ENCODE measurements at regions of chr4 and their contacts with region 1.

Region 1: DNA sequence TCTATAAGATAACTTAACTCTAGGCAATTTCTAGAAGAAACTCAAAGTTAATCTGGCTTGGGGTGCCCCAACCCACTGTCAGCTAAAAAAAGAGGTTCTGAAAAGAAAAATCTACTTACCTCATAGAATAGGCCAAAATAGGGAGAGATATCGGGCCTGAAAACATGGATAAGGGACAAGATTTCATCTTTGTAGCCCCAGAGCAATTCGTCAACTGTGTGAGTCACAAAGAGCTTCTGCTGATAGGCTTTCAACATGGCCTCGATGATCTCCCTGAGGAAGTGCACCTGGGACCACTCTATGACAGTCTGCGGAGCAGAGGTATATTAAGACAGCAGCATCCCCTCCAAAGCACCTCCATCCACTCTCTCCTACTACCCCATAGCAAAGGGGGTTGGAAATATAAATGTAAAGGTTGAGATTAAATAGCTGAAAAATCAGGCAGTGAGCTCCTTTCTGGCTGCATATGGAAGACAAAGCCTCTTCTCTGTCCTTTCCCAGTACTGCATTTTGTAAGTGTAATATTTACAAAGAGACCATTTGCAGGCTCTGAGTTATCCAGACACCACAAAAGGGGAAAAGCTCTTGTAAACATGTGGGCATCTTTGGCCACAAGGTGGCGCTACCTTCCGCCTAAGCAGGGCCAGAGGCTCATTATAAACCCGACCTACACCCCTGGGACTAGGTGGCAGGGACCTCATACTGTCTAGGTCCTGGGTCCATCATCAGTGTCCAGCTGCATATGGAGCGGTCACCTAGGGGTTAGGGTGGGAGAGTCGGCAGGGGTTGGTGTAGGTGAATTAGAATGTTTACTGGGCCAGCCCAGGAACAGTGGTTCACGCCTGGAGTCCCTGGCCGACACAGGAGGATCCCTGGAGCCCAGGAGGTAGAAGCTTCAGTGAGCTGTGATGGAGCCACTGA is 31.5 kb upstream of the NUP54 start:
- DNase-seq: peak; percentile 92
- H3K4me3 ChIP-seq: no peak overlapping the region
- H3K27ac ChIP-seq: peak overlapping the region in 2 of 4 donors; percentile 34 to 37
- H3K4me1 ChIP-seq: peaks cover 0 to 17% (median 9%) of the 10 kb centered on the region in 4 donors
- H3K27me3 ChIP-seq: no peaks in the 10 kb centered on the region
- CTCF ChIP-seq: peak; percentile 71 to 96 (median 82)
- EP300 ChIP-seq: no peak
- POLR2A ChIP-seq: no peak

Region 2: GRCh38 chr4:76251441-76252270 is 72.0 kb after region 1 on chr4 and contains the start of gene FAM47E:
- intact Hi-C with region 1: loop called (anchors 1 kb)
- DNase-seq: peak; percentile 88
- H3K4me3 ChIP-seq: peak within 1 kb of the TSS; percentile 45 to 81 (median 56)
- H3K27ac ChIP-seq: peak within 1 kb of the TSS; percentile 10 to 46 (median 18)
- H3K4me1 ChIP-seq: peaks cover 0 to 16% (median 7%) of the 10 kb centered on the region in 4 donors
- H3K27me3 ChIP-seq: no peaks in the 10 kb centered on the region
- CTCF ChIP-seq: peak in 1 of 4 experiments; percentile 37
- EP300 ChIP-seq: no peak
- POLR2A ChIP-seq: no peak
- total RNA-seq, gene FAM47E: 1.7 to 3.3 (median 2.0) TPM

Region 3: GRCh38 chr4:76420762-76421581 is 241.3 kb after region 1 on chr4 and contains the start of gene CCDC158:
- intact Hi-C with region 1: loop called (anchors 2 kb)
- DNase-seq: no peak
- H3K4me3 ChIP-seq: peak within 1 kb of the TSS; percentile 36 to 59 (median 57)
- H3K27ac ChIP-seq: peak within 1 kb of the TSS in 3 of 4 donors; percentile 4 to 47 (median 24)
- H3K4me1 ChIP-seq: peaks cover 0 to 17% (median 14%) of the 10 kb centered on the region in 4 donors
- H3K27me3 ChIP-seq: peaks cover 0 to 3% (median 0%) of the 10 kb centered on the region in 3 donors
- CTCF ChIP-seq: no peak
- EP300 ChIP-seq: no peak
- POLR2A ChIP-seq: no peak
- total RNA-seq, gene CCDC158: 0.41 to 1.7 (median 0.82) TPM in 3 of 4 donors, not detected in the other

Region 4: DNA sequence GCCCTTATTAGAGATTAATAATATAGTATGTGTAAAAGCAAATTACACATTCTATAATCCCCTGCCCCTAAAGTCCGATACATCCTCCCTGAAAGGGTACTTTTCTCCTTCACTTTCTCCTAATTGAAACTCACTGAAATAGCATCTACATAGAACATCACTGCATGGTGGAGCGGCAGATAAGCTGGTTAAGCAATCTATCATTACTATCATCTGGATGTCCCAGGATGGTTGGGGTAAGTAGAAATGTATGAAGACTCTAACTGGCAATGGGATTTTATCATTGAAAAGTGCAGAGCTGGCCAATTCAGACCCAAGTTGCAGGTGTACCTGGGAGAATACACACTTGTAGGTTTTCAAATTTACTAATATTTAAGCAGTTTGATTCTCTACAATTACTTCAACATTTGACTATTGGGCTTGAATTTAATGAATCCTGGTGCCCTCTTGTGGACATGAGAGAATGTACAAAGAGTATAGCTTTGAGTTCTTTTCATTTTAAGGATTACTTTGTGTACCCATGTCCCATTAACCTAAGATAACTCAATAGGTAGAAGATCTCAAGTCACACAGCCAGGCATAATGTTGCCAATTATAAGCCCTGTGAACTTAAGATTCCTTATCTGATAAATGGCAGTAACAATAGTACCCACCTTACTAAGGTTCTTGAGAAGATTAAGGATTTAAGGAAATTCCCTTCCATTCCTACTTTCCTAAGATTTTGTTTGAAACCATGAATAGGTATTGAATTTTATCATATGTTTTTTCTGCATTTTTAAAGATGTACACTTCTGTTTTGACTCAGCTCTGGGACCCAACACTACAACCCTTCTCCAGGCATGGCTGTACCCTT is 325.2 kb after region 1 on chr4:
- intact Hi-C with region 1: loop called (anchors 1 kb)
- DNase-seq: no peak
- H3K4me3 ChIP-seq: no peak overlapping the region
- H3K27ac ChIP-seq: no peak overlapping the region
- H3K4me1 ChIP-seq: no peaks in the 10 kb centered on the region
- H3K27me3 ChIP-seq: no peaks in the 10 kb centered on the region
- CTCF ChIP-seq: peak; percentile 15 to 74 (median 60)
- EP300 ChIP-seq: no peak
- POLR2A ChIP-seq: no peak

Measured in sigmoid colon (tissue), 7 donors.